ENCODE measurements at regions of chr9 and their contacts with region 1.

Region 1: GRCh38 chr9:81374459-81375186 is 314.7 kb downstream of the TLE1 start:
- DNase-seq: peak in 3 of 5 donors; percentile 34 to 49 (median 36)
- ATAC-seq: peak in 3 of 4 donors; percentile 48 to 52 (median 49)
- H3K4me3 ChIP-seq: no peak overlapping the region
- H3K27ac ChIP-seq: peak overlapping the region in 7 of 12 donors; percentile 13 to 73 (median 50)
- H3K4me1 ChIP-seq: peaks cover 0 to 35% (median 27%) of the 10 kb centered on the region in 12 donors
- H3K27me3 ChIP-seq: no peaks in the 10 kb centered on the region
- CTCF ChIP-seq: no peak
- POLR2A ChIP-seq: no peak

Region 2: DNA sequence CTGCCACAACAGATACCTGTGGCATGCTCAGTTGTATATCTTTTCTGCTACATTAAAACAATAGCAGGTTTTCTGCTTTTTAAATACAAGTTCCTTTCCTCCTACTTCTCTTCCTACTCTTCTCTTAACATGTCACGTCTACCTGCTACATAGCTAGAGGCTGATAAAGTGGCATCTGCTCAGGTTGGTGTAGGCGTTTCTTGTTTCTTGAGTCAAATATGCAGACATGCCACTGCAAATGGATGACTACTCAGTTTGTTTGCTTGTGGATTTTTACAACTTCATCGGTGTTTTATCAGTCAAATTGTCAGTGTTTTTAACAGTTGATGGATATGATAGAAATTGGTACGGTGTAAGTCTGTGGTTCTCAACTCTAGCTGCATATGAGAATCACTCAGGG is 1277.1 kb before region 1 on chr9:
- intact Hi-C with region 1: no loop called
- DNase-seq: no peak
- ATAC-seq: no peak
- H3K4me3 ChIP-seq: no peak overlapping the region
- H3K27ac ChIP-seq: no peak overlapping the region
- H3K4me1 ChIP-seq: no peaks in the 10 kb centered on the region
- H3K27me3 ChIP-seq: no peaks in the 10 kb centered on the region
- CTCF ChIP-seq: no peak
- POLR2A ChIP-seq: no peak

Region 3: DNA sequence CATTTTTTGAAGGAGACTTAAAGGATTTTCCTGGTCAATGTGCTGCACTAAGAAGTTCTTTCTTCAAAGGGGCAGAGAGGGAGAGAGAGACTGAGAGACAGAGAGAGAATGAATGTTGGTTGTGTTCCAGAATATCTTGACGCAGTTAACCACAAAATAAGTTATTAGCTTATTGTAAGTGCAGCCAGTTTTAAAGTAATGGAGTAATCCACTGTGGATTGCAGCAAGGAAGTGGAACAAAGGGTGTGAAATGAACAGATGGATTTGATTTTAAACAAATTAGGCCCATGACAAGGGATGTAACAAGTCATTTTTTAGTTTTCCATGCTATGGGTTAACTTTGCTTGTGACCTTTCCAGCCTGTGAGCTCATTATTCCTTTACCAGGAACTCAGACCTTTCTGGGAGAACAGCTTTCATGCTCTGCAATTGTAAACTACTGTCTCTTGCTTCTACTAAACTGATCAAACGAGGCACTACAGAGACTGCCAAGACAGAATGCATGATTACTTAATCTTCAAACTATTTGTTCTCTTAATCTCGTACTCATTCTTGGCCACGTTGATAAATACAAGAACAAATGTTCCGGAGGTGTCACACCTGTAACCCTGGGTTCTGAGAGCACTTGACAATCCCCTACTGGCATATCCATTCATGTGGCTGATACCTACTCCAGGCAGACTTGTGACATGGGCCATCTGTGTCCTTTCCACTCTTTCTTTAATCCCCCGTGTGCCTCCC is 183.6 kb after region 1 on chr9:
- intact Hi-C with region 1: loop called in 1 of 10 experiments (anchors 10 kb)
- DNase-seq: no peak
- ATAC-seq: peak; percentile 52 to 80 (median 78)
- H3K4me3 ChIP-seq: no peak overlapping the region
- H3K27ac ChIP-seq: peak overlapping the region in 8 of 12 donors; percentile 6 to 63 (median 48)
- H3K4me1 ChIP-seq: peaks cover 0 to 21% (median 9%) of the 10 kb centered on the region in 12 donors
- H3K27me3 ChIP-seq: no peaks in the 10 kb centered on the region
- CTCF ChIP-seq: no peak
- POLR2A ChIP-seq: no peak

Region 4: DNA sequence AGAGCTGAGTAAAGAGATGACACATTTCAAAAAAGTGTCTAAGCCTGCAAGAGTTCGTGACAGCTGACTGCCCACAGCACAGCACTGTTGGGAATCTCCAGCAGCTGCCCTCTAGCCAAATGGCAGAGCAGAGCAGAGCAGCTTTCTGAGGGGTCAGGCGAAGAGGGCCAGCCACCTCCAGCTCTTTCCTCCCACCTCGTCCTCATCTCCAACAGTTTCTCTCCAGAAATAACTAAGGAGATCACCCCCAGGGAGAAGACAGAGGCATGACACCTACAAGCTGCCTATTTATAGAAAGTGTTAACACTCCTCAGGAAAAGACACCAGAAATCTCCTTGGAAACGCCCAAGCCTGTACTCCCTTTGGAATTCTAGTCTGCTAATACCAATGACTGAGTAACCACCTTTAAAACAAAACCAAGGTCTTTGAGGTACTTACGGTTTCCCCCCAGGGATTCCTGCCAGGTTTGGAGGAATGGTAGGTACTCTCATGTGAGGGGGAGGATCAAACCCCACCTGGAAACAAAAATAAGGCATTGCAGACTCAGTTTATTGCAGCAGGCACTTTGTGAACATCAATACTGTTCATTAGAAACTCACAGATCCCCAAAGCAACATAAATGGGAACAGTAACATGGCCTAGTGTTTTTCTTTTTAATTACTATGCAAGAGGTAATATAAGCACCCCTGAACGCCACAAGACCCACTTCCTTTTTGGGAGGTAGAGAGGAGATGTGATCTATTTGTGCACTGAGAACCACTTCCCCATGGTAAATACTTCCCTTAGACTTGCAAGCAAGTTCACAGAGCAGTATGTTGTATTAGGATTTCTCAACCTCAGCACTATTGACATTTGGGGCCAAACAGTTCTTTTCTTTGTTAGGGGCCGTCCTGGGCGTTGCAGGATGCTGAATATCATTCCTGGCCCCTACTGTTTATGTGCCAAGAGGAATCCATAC is 235.4 kb after region 1 on chr9:
- intact Hi-C with region 1: loop called in 2 of 10 experiments (anchors 5 to 10 kb)
- DNase-seq: no peak
- ATAC-seq: no peak
- H3K4me3 ChIP-seq: no peak overlapping the region
- H3K27ac ChIP-seq: peak overlapping the region in 1 of 12 donors; percentile 5
- H3K4me1 ChIP-seq: peaks cover 0 to 28% (median 11%) of the 10 kb centered on the region in 12 donors
- H3K27me3 ChIP-seq: no peaks in the 10 kb centered on the region
- CTCF ChIP-seq: no peak
- POLR2A ChIP-seq: no peak

Measured in heart left ventricle (tissue), 16 donors.